GM10248 (cell line): ENCODE measurements at regions of chr6 and their contacts with region 1.

Region 1: GRCh38 chr6:112043032-112044007 is 10.6 kb upstream of the CCN6 start:
- DNase-seq: peak; percentile 87
- CTCF ChIP-seq: peak; percentile 98

Region 2: GRCh38 chr6:111721753-111722154 is 321.6 kb before region 1 on chr6:
- CTCF ChIA-PET with region 1: interaction called, 11 read pairs
- POLR2A ChIA-PET with region 1: no interaction called
- DNase-seq: peak; percentile 48
- CTCF ChIP-seq: peak; percentile 46

Region 3: GRCh38 chr6:112018619-112019416 is 24.5 kb before region 1 on chr6:
- CTCF ChIA-PET with region 1: interaction called, 20 read pairs
- POLR2A ChIA-PET with region 1: no interaction called
- DNase-seq: no peak
- CTCF ChIP-seq: no peak

Region 4: DNA sequence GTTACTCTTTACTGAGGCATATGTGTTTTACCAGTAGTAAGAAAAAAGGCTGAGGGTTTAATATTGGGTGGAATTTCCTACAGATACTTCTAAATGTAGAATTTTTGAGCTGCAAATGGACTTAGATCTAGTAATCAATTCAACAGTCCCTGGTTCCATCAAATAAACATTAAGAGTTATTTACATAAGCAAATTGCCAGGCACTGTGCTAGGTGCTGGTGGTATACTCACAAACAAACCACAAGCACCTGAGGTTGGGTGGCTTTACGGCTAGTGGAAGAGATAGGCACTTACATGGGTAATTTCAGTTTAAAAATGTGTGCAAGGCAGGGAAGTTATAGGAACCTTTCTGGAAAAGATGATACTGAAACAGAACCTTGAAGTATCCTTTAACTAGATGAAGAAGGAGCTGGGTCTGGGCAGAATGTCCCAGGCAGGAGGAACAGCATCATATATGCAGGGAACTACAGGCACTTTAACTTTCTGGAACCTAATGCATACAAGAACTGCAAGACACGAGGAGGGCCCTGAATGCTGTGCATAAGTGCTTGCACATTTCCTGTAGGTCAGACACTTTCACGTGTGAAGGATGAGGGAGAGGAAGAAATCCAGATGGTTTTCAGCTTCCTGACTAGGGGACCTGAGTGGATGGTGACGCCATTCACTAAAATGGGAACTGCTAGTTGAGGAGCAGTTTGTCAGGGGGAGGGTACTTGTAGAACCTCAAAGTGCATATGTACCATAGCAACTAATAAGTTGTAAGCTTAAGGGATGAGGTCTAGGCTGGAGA is 15.1 kb after region 1 on chr6:
- CTCF ChIA-PET with region 1: interaction called, 10 read pairs
- POLR2A ChIA-PET with region 1: no interaction called
- DNase-seq: no peak
- CTCF ChIP-seq: no peak